BJ (cell line): ENCODE measurements at regions of chr12 and their contacts with region 1.

Region 1: DNA sequence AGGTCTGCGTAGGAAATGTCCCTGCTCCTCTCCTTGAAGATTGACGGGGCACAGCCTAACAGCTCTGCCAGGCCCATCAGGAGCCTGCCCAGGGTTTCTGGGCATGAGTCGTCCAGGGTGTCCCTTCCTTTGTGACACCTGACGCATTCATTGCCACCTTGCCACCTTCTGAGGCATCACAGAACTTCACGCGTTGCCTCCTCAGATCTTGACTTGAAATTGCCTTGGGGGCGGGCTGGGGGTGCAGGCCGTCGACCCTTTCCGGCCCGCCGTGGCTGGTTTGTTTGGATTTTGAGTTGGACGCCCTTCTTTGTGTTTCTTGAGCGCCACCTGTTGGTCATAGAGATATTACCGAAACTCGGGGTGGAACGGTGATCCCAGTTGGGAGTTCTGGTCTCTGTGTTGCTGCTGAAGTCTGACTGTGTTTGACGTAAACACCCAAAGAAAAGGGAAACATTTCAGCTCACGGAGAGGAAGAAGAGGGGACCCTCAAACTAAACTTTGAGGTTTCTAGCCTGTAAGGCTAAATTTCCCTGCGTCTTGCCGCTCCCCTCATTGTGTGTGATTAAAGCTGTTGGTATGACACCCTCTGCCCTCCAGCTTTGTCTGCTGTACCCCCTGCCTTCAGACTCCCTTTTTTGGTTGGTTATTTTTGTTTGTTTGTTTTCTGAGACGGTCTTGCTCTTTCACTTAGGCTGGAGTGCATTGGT is 44.6 kb downstream of the MLXIP start:
- DNase-seq: no peak
- H3K4me3 ChIP-seq: no peak overlapping the region
- H3K27me3 ChIP-seq: no peaks in the 10 kb centered on the region
- CTCF ChIP-seq: peak; percentile 71

Region 2: GRCh38 chr12:122064025-122064777 is 59.0 kb before region 1 on chr12:
- CTCF ChIA-PET with region 1: interaction called, 31 read pairs
- POLR2A ChIA-PET with region 1: no interaction called
- DNase-seq: peak; percentile 73
- H3K4me3 ChIP-seq: 0 out of 2 replicates have a peak overlapping the region, but pooled peaks have one; percentile 1
- H3K27me3 ChIP-seq: no peaks in the 10 kb centered on the region
- CTCF ChIP-seq: peak; percentile 61

Region 3: DNA sequence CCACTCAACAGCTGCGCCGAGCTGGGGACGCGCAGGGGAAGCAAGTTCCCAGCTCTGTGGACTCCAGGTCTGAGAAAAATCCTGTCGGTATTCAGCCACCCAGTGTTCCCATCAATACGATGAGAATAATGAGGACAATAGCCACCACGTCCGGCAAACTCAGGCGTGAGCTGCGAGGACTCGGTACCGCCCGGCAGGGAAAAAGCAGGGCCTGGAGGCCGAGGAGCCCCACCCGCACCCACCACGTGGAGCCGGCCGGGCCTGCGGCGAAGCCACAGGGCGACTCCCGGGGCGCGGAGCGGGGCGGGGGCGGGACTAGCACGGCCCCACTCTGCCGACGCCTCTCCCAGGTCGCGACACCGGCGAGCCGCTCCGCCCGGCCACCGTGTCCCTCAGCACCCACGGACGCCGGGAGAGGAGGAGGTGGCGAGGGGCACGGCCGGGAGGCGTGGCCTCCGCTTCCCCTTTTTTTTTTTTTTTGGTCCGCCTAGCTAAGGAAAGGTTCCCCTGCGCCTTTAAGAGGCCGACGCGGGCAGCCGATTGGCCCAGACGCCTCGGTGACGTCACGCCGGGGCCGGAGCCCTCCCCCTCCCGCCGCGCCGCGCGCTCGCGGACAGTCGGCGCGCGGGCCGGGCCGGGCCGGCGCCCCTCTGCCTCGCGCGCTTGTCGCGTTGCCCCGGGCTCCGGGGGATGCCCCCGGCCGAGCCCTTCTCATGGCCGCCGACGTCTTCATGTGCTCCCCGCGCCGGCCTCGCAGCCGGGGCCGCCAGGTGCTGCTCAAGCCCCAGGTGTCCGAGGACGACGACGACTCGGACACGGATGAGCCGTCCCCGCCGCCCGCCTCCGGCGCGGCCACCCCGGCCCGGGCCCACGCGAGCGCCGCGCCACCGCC is 44.8 kb before region 1 on chr12 and contains the start of gene MLXIP:
- CTCF ChIA-PET with region 1: interaction called, 43 read pairs
- POLR2A ChIA-PET with region 1: no interaction called
- DNase-seq: no peak
- H3K4me3 ChIP-seq: peak within 1 kb of the TSS; percentile 69
- H3K27me3 ChIP-seq: no peaks in the 10 kb centered on the region
- CTCF ChIP-seq: no peak
- polyA plus RNA-seq, gene MLXIP: 3.3 and 4.8 TPM in 2 replicates

Region 4: DNA sequence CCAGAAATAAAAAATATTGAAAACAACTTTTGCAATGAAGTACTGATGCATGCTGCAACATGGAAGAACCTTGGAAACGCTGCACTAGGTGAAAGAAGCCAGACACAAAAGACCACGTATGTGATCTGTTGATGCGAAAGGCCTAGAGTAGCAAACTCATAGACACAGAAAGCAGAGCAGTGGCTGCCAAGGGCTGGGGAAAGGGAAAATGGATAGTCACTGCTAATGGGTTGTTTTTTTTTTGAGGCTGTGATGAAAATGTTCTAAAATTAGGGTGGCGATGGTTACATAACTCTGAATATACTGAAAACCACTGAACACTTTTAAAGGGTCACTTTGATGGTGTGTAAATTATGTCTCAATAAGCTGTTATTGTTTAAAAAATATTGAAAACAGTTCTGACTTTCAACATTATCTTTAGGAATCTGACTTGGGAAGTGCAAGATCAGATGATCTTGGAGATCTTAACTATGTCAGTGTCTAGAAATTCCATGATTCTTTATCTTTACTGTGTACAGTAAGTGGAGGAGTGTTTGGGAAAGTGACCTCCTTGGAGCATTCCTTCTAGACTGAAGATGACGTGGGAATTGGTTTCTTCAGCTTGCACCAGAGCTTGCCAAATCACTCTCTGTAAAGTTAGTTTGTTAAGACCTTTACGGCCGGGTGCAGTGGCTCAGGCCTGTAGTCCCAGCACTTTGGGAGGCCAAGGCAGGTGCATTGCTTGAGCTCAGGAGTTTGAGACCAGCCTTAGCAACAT is 32.3 kb before region 1 on chr12:
- CTCF ChIA-PET with region 1: interaction called, 21 read pairs
- POLR2A ChIA-PET with region 1: no interaction called
- DNase-seq: peak; percentile 89
- H3K4me3 ChIP-seq: no peak overlapping the region
- H3K27me3 ChIP-seq: no peaks in the 10 kb centered on the region
- CTCF ChIP-seq: no peak

Region 5: GRCh38 chr12:122097927-122098756 is 25.1 kb before region 1 on chr12:
- CTCF ChIA-PET with region 1: interaction called, 21 read pairs
- POLR2A ChIA-PET with region 1: no interaction called
- DNase-seq: no peak
- H3K4me3 ChIP-seq: no peak overlapping the region
- H3K27me3 ChIP-seq: no peaks in the 10 kb centered on the region
- CTCF ChIP-seq: no peak

Region 6: DNA sequence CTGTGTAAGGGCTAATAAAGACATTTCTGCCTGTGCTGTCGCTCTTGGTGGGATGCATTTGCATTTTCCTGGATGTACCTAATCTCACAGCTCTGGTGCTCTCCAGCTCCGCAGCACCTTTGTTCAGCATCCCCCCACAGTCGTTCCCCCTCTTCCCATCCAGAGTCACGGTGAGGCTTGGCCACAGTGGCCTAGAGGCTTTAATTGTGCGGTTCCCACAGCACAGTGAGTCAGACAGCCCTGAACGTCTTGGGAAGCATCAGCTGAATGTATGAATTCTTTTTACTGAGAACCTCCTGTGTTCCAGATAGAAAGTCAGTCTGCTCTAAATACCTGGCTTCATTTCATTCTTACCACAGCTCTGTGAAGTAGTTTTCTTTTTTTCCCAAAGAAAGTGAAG is 15.9 kb before region 1 on chr12:
- CTCF ChIA-PET with region 1: interaction called, 32 read pairs
- POLR2A ChIA-PET with region 1: no interaction called
- DNase-seq: no peak
- H3K4me3 ChIP-seq: no peak overlapping the region
- H3K27me3 ChIP-seq: no peaks in the 10 kb centered on the region
- CTCF ChIP-seq: no peak